ENCODE measurements at regions of chr17 and their contacts with region 1.

Region 1: GRCh38 chr17:30104575-30105339 is 11.9 kb upstream of the NSRP1 start:
- DNase-seq: peak; percentile 82 to 93 (median 85)
- ATAC-seq: peak; percentile 99
- H3K4me3 ChIP-seq: peak overlapping the region; percentile 38
- H3K27ac ChIP-seq: peak overlapping the region; percentile 77
- H3K4me1 ChIP-seq: peaks cover 5% of the 10 kb centered on the region in 2 experiments; a peak in 3 of 5 replicates
- H3K27me3 ChIP-seq: no peaks in the 10 kb centered on the region; a peak in 1 of 5 replicates
- CTCF ChIP-seq: peak; percentile 91 to 95 (median 92)
- EP300 ChIP-seq: peak; percentile 14; the same call in 1 of the 2 replicates
- POLR2A ChIP-seq: peak; percentile 51
- RAD21 ChIP-seq: peak; percentile 89 to 93

Region 2: DNA sequence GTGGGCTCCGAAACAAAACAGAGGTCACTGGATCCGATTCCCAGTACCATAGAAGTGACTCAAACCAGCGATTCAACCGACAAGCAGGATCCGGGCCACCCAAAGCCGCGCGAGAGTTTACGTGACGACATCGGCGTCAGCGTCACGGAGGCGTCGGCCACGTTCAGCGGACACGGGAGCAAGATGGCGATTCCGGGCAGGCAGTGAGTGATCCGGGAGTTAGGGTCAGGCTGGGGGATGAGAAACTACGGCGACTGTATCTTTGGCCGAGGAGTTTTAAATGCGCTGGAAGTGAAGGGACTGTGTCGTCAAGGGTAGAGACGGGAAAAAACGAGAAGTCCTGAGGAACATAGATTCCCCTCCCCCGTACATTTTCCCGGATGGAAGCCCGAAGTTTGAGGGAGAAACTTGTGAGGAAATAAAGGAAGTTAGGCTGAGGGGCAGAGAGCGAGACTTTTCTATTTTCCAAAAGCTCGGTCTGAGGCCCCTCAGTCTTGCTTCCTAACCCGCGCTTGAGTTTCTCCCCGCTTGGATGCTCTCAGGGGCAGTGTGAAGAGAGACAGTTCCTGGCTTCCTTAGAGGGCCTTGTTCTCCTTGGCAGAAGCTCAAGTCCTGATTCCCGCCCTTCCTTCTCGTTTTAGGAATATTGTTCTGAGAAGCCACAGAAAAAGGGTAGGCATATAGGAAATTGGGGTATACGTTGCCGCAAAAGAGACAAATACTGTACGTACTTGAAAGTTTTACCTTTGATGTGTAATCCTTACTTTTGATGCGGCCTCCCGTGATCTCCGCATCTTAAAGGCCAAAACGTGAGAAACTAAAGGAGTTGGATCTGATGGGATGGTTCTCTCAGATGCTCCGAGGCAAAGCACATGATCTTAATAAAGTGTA is 12.1 kb after region 1 on chr17 and contains the start of gene NSRP1:
- CTCF ChIA-PET with region 1: interaction called, 3 read pairs
- POLR2A ChIA-PET with region 1: interaction called, 14 read pairs
- in situ Hi-C with region 1: no loop called
- intact Hi-C with region 1: no loop called
- DNase-seq: peak; percentile 90 to 98 (median 90)
- ATAC-seq: peak; percentile 94
- H3K4me3 ChIP-seq: peak within 1 kb of the TSS; percentile 61
- H3K27ac ChIP-seq: peak within 1 kb of the TSS; percentile 97
- H3K4me1 ChIP-seq: peaks cover 5 to 10% of the 10 kb centered on the region in 2 experiments; a peak in 3 of 5 replicates
- H3K27me3 ChIP-seq: no peaks in the 10 kb centered on the region
- CTCF ChIP-seq: no peak
- EP300 ChIP-seq: 0 out of 2 replicates have a peak, but pooled peaks have one; percentile 4
- POLR2A ChIP-seq: peak; percentile 99
- RAD21 ChIP-seq: no peak
- polyA plus RNA-seq, gene NSRP1: 52.8 to 54.2 TPM

Region 3: GRCh38 chr17:30203471-30203981 is 98.8 kb after region 1 on chr17:
- CTCF ChIA-PET with region 1: interaction called, 3 read pairs
- POLR2A ChIA-PET with region 1: no interaction called
- in situ Hi-C with region 1: no loop called
- intact Hi-C with region 1: loop called (anchors 10 kb)
- DNase-seq: peak; percentile 43 to 67 (median 54)
- ATAC-seq: peak; percentile 89
- H3K4me3 ChIP-seq: peak overlapping the region; percentile 14; the same call in 1 of the 2 replicates
- H3K27ac ChIP-seq: peak overlapping the region; percentile 43; the same call in 1 of the 3 replicates
- H3K4me1 ChIP-seq: peaks cover 4 to 9% of the 10 kb centered on the region in 2 experiments; a peak in 3 of 5 replicates
- H3K27me3 ChIP-seq: peaks cover 5 to 7% of the 10 kb centered on the region in 2 experiments; a peak in 3 of 5 replicates
- CTCF ChIP-seq: peak; percentile 48 to 51 (median 49)
- EP300 ChIP-seq: no peak
- POLR2A ChIP-seq: no peak
- RAD21 ChIP-seq: no peak; a peak in 1 of 4 replicates

Region 4: GRCh38 chr17:30716461-30717300 is 611.9 kb after region 1 on chr17:
- CTCF ChIA-PET with region 1: no interaction called
- POLR2A ChIA-PET with region 1: no interaction called
- in situ Hi-C with region 1: loop called (anchors 10 kb)
- intact Hi-C with region 1: no loop called
- DNase-seq: no peak
- ATAC-seq: peak; percentile 15; the same call in 1 of the 3 replicates
- H3K4me3 ChIP-seq: no peak overlapping the region
- H3K27ac ChIP-seq: no peak overlapping the region
- H3K4me1 ChIP-seq: peaks cover 0 to 20% of the 10 kb centered on the region in 2 experiments; a peak in 3 of 5 replicates
- H3K27me3 ChIP-seq: no peaks in the 10 kb centered on the region
- CTCF ChIP-seq: peak; percentile 30 to 36 (median 31); a peak in 5 of 6 replicates
- EP300 ChIP-seq: no peak
- POLR2A ChIP-seq: no peak
- RAD21 ChIP-seq: peak in 1 of 2 experiments; percentile 31; a peak in 2 of 4 replicates

Measured in K562 (cell line).